GM12878 (cell line): ENCODE measurements at regions of chr10 and their contacts with region 1.

Region 1: GRCh38 chr10:34145715-34146114 is 669.4 kb downstream of the PARD3 start:
- DNase-seq: no peak
- ATAC-seq: no peak
- H3K4me3 ChIP-seq: no peak overlapping the region
- H3K27ac ChIP-seq: no peak overlapping the region
- H3K4me1 ChIP-seq: no peaks in the 10 kb centered on the region
- H3K27me3 ChIP-seq: no peaks in the 10 kb centered on the region
- CTCF ChIP-seq: no peak
- EP300 ChIP-seq: no peak
- POLR2A ChIP-seq: no peak
- RAD21 ChIP-seq: no peak

Region 2: GRCh38 chr10:34193931-34194626 is 48.4 kb after region 1 on chr10:
- CTCF ChIA-PET with region 1: no interaction called
- POLR2A ChIA-PET with region 1: interaction called, 4 read pairs
- RAD21 ChIA-PET with region 1: interaction called, 11 read pairs
- SMC1A ChIA-PET with region 1: interaction called, 19 read pairs
- in situ Hi-C with region 1: no loop called
- intact Hi-C with region 1: no loop called
- DNase-seq: no peak
- ATAC-seq: no peak
- H3K4me3 ChIP-seq: no peak overlapping the region
- H3K27ac ChIP-seq: no peak overlapping the region
- H3K4me1 ChIP-seq: no peaks in the 10 kb centered on the region
- H3K27me3 ChIP-seq: no peaks in the 10 kb centered on the region
- CTCF ChIP-seq: no peak
- EP300 ChIP-seq: no peak
- POLR2A ChIP-seq: no peak
- RAD21 ChIP-seq: no peak

Region 3: GRCh38 chr10:34200355-34200901 is 54.7 kb after region 1 on chr10:
- CTCF ChIA-PET with region 1: interaction called, 3 read pairs
- POLR2A ChIA-PET with region 1: interaction called, 4 read pairs
- RAD21 ChIA-PET with region 1: interaction called, 11 read pairs
- SMC1A ChIA-PET with region 1: interaction called, 19 read pairs
- in situ Hi-C with region 1: no loop called
- intact Hi-C with region 1: loop called (anchors 5 kb)
- DNase-seq: no peak
- ATAC-seq: peak; percentile 44; the same call in 2 of the 3 replicates
- H3K4me3 ChIP-seq: no peak overlapping the region
- H3K27ac ChIP-seq: no peak overlapping the region
- H3K4me1 ChIP-seq: no peaks in the 10 kb centered on the region
- H3K27me3 ChIP-seq: no peaks in the 10 kb centered on the region
- CTCF ChIP-seq: no peak
- EP300 ChIP-seq: no peak
- POLR2A ChIP-seq: no peak
- RAD21 ChIP-seq: no peak

Region 4: GRCh38 chr10:34305190-34305589 is 159.5 kb after region 1 on chr10:
- CTCF ChIA-PET with region 1: interaction called, 3 read pairs
- POLR2A ChIA-PET with region 1: no interaction called
- RAD21 ChIA-PET with region 1: interaction called, 3 read pairs
- SMC1A ChIA-PET with region 1: no interaction called
- in situ Hi-C with region 1: no loop called
- intact Hi-C with region 1: loop called (anchors 10 kb)
- DNase-seq: no peak
- ATAC-seq: peak; percentile 95
- H3K4me3 ChIP-seq: no peak overlapping the region
- H3K27ac ChIP-seq: no peak overlapping the region
- H3K4me1 ChIP-seq: no peaks in the 10 kb centered on the region
- H3K27me3 ChIP-seq: no peaks in the 10 kb centered on the region
- CTCF ChIP-seq: peak; percentile 12 to 47 (median 32); a peak in 3 of 6 replicates
- EP300 ChIP-seq: no peak
- POLR2A ChIP-seq: no peak
- RAD21 ChIP-seq: peak; percentile 20; the same call in 1 of the 2 replicates

Region 5: DNA sequence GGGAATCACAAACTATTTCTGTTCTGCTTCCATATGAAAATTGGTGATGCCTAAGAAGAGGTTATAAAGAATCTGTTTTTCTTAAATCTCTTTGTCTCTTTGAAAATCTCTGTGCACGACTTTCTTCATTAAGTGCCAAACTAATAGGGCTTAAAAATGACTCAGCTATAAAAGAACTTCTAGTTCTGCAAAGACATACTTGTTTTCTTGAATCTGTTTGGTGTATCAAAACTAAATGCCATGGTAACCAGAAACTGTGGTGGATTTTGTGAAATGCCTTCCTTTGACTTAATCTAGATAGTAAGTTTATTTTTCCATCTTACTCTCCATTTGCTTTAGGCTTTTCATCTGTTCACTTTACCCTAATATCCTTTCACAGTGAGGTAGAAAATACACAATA is 251.6 kb after region 1 on chr10:
- CTCF ChIA-PET with region 1: no interaction called
- POLR2A ChIA-PET with region 1: no interaction called
- RAD21 ChIA-PET with region 1: no interaction called
- SMC1A ChIA-PET with region 1: no interaction called
- in situ Hi-C with region 1: no loop called
- intact Hi-C with region 1: no loop called
- DNase-seq: no peak
- ATAC-seq: no peak
- H3K4me3 ChIP-seq: no peak overlapping the region
- H3K27ac ChIP-seq: no peak overlapping the region
- H3K4me1 ChIP-seq: no peaks in the 10 kb centered on the region
- H3K27me3 ChIP-seq: no peaks in the 10 kb centered on the region
- CTCF ChIP-seq: no peak
- EP300 ChIP-seq: no peak
- POLR2A ChIP-seq: no peak
- RAD21 ChIP-seq: no peak